ENCODE measurements at regions of chr11 and their contacts with region 1.

Region 1: GRCh38 chr11:112265721-112266409 is 5.2 kb upstream of the PLET1 start:
- DNase-seq: no peak
- H3K4me3 Mint-ChIP-seq: no peak overlapping the region
- H3K27ac Mint-ChIP-seq: no peak overlapping the region
- H3K4me1 Mint-ChIP-seq: no peaks in the 10 kb centered on the region
- H3K27me3 Mint-ChIP-seq: no peaks in the 10 kb centered on the region

Region 2: GRCh38 chr11:111946499-111946898 is 319.4 kb before region 1 on chr11:
- CTCF ChIA-PET with region 1: no interaction called
- POLR2A ChIA-PET with region 1: interaction called, 16 read pairs
- DNase-seq: no peak
- H3K4me3 Mint-ChIP-seq: no peak overlapping the region
- H3K27ac Mint-ChIP-seq: no peak overlapping the region
- H3K4me1 Mint-ChIP-seq: peaks cover 23% of the 10 kb centered on the region
- H3K27me3 Mint-ChIP-seq: no peaks in the 10 kb centered on the region